ENCODE measurements at regions of chr6 and their contacts with region 1.

Region 1: GRCh38 chr6:105739764-105740163 is 336.9 kb upstream of the PREP start:
- DNase-seq: no peak
- H3K4me3 ChIP-seq: no peak overlapping the region
- H3K27ac ChIP-seq: no peak overlapping the region
- H3K4me1 ChIP-seq: peaks cover 14% of the 10 kb centered on the region
- H3K27me3 ChIP-seq: no peaks in the 10 kb centered on the region

Region 2: DNA sequence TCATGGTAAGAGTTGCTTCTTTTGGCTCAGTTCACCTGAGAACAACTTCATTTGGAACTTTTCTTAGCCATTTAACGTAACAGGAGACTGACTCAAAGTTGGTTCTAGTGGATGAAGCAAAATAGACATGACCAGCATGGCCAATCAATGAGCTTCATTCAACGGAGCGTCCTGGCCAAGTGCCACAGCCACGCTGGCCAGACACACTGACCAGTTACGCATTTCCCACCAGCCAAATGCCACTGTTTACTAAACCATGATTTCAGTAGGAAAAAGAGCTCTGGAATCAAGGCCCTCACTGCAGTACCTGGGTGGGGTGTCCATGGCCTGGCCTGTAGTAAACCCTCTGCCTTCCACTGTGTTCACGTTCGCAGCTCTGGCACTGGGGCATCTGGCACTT is 640.4 kb before region 1 on chr6:
- in situ Hi-C with region 1: no loop called
- DNase-seq: no peak
- H3K4me3 ChIP-seq: no peak overlapping the region
- H3K27ac ChIP-seq: no peak overlapping the region
- H3K4me1 ChIP-seq: no peaks in the 10 kb centered on the region
- H3K27me3 ChIP-seq: no peaks in the 10 kb centered on the region

Region 3: DNA sequence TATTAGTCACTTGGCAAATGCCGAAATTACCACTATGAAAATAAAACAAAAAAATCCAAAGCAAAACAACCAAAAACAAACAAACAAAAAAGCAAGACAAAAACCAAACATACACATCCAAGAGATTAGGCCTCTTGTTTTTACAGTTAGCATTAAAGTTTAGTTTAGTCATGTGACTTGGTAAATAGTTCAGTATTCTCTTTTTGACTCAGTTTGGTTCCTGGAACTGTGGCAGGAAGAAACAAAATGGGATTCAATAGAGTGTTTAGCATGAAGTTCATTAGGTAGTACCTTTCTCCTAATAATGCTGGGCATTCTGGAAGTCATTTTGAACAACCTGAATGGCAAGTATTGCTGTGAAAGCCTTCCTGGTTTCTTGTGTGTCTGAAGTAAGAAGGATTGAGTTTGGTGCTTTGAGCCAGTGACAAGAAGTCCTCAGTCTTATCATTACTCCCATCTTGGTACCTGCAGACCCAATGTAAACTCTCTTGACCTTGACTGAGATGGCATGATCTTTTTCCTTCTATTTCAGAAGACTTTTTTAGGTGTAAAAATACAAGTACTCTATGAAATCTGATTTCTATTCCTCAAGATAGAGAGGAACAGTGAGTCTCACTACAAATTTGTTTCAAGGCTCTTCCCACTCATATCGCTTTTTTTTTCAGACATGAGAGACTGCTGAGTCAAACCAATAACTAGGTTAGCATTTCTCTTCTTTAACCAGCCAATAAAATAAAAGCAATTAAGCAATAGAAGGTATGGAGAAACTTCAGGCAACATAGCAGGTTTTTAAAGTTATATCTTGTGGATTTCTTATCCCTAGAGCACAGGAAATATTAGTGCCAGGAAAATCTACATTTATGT is 113.2 kb before region 1 on chr6:
- in situ Hi-C with region 1: no loop called
- DNase-seq: no peak
- H3K4me3 ChIP-seq: no peak overlapping the region
- H3K27ac ChIP-seq: no peak overlapping the region
- H3K4me1 ChIP-seq: no peaks in the 10 kb centered on the region
- H3K27me3 ChIP-seq: no peaks in the 10 kb centered on the region

Region 4: DNA sequence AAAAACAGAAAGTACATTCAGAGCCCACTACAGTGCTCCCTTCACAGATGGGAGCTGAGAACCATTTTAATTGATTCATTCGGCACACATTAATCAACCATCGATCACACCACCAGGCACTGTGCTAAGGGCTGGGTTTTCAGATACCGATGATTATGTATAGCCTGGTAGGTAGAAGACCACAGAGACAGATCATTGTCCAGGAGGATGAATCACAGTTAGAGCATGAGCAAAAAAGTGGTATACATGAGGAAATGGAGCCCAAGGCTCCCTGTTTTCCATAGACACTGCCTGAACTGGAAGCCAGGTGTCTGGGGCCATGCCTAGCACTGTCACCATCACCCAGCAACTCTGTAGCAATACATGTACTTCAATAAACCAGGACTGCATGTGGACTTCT is 337.4 kb after region 1 on chr6:
- in situ Hi-C with region 1: loop called (anchors 5 kb)
- DNase-seq: peak; percentile 28
- H3K4me3 ChIP-seq: no peak overlapping the region
- H3K27ac ChIP-seq: no peak overlapping the region
- H3K4me1 ChIP-seq: peaks cover 1% of the 10 kb centered on the region
- H3K27me3 ChIP-seq: no peaks in the 10 kb centered on the region

Measured in GM23248 (cell line).